Ascending aorta (tissue), 2 donors: ENCODE measurements at regions of chr4 and their contacts with region 1.

Region 1: DNA sequence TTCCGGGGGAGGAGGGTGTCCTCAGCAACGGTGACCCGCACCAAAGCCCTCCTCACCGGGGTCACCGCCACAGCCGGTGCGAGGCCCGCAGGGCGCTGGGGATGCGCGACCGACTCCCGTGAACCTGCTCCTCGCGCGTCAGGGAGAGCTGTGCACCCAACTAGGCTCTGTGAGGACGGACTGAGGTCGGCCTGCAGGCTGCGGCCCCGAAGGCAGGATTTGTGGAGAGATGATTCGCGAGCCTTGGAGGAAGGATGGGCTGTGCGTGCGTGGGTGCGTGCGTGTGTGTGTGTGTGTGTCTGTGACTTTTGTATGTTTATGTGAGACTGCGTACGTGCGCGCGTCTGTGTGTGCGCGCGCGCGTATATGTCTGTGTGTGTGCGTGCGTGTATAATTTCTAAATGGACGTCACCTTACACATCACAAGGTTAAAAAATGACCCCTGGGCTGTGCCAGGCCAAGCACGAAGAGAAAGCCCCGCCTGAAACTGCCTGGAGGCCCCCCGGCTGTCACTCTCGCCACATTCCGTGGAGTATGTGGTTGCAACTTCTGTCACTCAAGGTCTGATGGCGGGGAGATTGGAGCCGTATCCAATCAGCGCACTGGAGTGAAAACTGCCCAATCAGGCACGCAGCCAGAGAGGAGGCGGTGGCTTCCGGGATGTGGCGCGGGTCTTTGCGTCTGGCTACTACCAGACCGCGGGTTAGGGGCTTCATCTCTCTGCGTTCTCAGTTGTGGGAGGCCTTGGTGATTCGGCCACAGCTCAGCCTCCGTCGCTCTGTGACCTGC is at the start of gene ZNF141:
- DNase-seq: peak; percentile 92 to 98
- H3K4me3 ChIP-seq: peak within 1 kb of the TSS; percentile 84 to 100
- H3K27ac ChIP-seq: peak within 1 kb of the TSS; percentile 94 to 95
- H3K4me1 ChIP-seq: peaks cover 0 to 14% of the 10 kb centered on the region in 2 donors
- H3K27me3 ChIP-seq: no peaks in the 10 kb centered on the region
- CTCF ChIP-seq: no peak
- total RNA-seq, gene ZNF141: 2.9 TPM

Region 2: GRCh38 chr4:124275-125081 is 212.9 kb before region 1 on chr4 and contains the start of gene ZNF718:
- intact Hi-C with region 1: loop called (anchors 2 kb)
- DNase-seq: peak; percentile 86 to 97
- H3K4me3 ChIP-seq: peak within 1 kb of the TSS; percentile 73 to 82
- H3K27ac ChIP-seq: peak within 1 kb of the TSS; percentile 85 to 90
- H3K4me1 ChIP-seq: peaks cover 6% of the 10 kb centered on the region in 2 donors
- H3K27me3 ChIP-seq: no peaks in the 10 kb centered on the region
- CTCF ChIP-seq: no peak
- total RNA-seq, gene ZNF718: 0.32 TPM

Region 3: GRCh38 chr4:473570-474457 is 136.5 kb after region 1 on chr4:
- intact Hi-C with region 1: loop called (anchors 1 kb)
- DNase-seq: peak; percentile 89 to 97
- H3K4me3 ChIP-seq: peak overlapping the region; percentile 90 to 95
- H3K27ac ChIP-seq: peak overlapping the region; percentile 84 to 85
- H3K4me1 ChIP-seq: peaks cover 0 to 4% of the 10 kb centered on the region in 2 donors
- H3K27me3 ChIP-seq: no peaks in the 10 kb centered on the region
- CTCF ChIP-seq: no peak

Region 4: GRCh38 chr4:498328-498904 is 161.1 kb after region 1 on chr4:
- intact Hi-C with region 1: loop called (anchors 1 kb)
- DNase-seq: no peak
- H3K4me3 ChIP-seq: peak overlapping the region; percentile 72 to 87
- H3K27ac ChIP-seq: peak overlapping the region; percentile 62 to 92
- H3K4me1 ChIP-seq: peaks cover 6 to 9% of the 10 kb centered on the region in 2 donors
- H3K27me3 ChIP-seq: no peaks in the 10 kb centered on the region
- CTCF ChIP-seq: no peak

Region 5: GRCh38 chr4:705278-706082 is 368.1 kb after region 1 on chr4 and contains the start of gene PCGF3:
- intact Hi-C with region 1: loop called (anchors 5 kb)
- DNase-seq: peak; percentile 81 to 98
- H3K4me3 ChIP-seq: peak within 1 kb of the TSS; percentile 75 to 100
- H3K27ac ChIP-seq: peak within 1 kb of the TSS; percentile 79 to 92
- H3K4me1 ChIP-seq: peaks cover 6 to 13% of the 10 kb centered on the region in 2 donors
- H3K27me3 ChIP-seq: no peaks in the 10 kb centered on the region
- CTCF ChIP-seq: no peak
- total RNA-seq, gene PCGF3: 124 TPM